ENCODE measurements at regions of chr14 and their contacts with region 1.

Region 1: GRCh38 chr14:63800651-63801375 is 52.0 kb upstream of the SYNE2 start:
- DNase-seq: no peak
- H3K4me3 ChIP-seq: no peak overlapping the region
- CTCF ChIP-seq: no peak

Region 2: GRCh38 chr14:63745858-63746425 is 54.9 kb before region 1 on chr14:
- CTCF ChIA-PET with region 1: no interaction called
- POLR2A ChIA-PET with region 1: no interaction called
- DNase-seq: no peak
- H3K4me3 ChIP-seq: no peak overlapping the region
- CTCF ChIP-seq: no peak

Region 3: DNA sequence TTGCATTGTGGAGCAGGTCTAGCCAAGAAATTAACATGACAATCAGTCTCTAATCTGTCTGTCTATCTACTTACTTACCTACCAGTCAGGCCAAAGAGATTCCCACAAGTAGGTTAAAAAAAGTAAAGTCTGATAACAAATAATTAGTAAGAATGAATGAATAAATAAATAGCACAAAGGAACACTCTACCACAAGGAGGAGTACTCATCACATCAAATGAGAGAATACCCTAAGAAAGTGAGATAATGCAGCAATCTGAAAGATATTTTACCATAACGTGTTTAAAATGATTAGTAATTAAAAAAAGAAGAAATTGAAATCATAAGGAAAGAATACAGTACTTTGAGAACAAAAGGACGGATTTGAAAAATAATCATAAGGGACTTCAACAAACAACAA is 239.2 kb after region 1 on chr14:
- CTCF ChIA-PET with region 1: interaction called, 11 read pairs
- POLR2A ChIA-PET with region 1: no interaction called
- DNase-seq: no peak
- H3K4me3 ChIP-seq: no peak overlapping the region
- CTCF ChIP-seq: peak; percentile 5

Measured in AG04449 (cell line).